Activated T-helper 2 cell treated with anti-CD3 and anti-CD28 coated beads, Interferon-gamma antibody, Interleukin-2, Interleukin-4, amounts not matched to agents 10 μg/mL and 5 μg/mL and 100 μg/mL, durations not matched to agents 14 hours and 24 hours and 36 hours (primary cell): ENCODE measurements at regions of chr1 and their contacts with region 1.

Region 1: DNA sequence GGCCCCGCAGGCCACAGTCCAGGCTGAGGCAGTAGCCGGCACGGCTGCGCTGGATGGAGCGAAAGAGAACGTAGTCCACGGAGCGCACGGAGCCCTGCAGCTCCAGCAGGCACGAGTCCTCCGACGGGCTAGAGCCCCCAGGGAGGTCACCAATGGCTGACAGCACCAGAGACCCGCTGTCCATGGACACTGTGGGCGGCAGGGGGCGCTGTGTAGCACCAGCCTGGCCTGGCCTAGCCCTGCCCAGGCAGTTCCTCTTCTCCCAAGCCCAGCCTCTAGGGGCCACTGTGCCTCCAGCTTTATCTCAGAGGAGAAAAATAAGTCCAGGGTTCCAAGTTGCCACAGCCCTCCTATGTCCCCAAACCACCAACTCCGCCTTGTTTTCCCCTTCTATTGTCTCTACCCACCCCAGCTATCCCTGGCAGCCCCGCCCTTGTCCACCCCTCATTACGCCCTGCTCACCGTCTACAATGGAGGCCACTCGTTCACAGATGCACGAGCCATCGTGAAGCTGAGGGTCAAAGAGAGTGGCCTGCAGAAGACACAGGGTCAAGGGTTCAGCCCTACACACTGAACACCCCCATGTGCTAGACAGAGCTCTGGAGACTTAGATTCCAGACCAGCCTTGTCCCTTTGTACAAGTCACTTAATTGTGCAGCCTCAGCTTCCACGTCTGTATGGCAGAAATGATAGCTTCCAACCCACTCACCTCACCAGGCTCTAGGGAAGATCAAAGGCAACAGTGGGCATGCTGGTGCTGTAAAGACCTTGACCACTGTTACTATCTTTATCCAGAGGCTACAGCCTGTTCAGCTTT is 4.4 kb downstream of the ENTREP3 start:
- DNase-seq: peak; percentile 91
- H3K4me3 Mint-ChIP-seq: peak overlapping the region; percentile 58
- H3K27ac Mint-ChIP-seq: no peak overlapping the region
- H3K4me1 Mint-ChIP-seq: peaks cover 23% of the 10 kb centered on the region
- H3K27me3 Mint-ChIP-seq: no peaks in the 10 kb centered on the region

Region 2: DNA sequence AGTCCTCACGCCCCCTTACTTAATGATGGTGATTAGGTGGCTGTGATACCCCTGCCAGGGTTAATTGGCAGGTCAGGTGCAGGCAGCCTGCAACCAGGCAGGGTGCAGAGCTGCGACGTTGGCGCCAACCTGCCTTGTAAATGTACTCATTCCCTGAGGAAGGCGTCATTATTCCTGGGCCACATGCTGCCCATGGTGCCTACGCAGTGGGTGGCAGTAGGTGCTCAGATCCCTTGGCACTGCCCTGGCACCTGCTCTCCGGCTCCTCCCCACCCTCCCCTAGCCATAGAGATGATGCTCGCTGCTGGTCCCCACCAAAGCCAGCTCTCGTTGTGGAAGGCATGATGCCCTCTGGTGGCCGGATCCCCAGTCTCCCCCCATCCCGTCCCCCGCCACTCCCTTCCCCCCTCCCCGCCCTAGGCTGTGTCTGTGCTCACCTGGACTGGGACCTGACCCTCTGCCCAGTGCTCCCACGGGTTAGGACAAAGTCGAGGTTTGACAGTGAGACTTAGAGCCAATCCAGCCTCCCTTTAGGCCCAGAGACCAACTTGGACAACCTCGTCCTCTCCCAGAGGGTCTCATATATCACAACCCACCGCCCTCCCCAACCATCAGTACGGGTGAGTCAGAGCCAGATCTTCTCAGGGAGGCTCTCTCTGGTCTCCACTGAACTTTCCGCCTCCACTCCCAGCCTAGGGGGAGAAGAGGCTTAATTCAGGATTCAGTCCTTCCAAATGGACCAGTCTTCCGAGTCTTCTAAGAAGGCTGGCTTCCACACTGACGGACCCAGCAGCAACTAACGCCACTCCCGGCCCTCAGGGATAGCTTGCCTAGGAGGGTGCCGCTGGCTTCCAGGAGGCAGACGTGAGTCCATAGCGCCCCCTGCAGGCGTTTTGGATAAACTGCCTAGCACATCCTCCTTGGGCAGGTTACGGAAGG is 83.4 kb before region 1 on chr1:
- intact Hi-C with region 1: no loop called
- DNase-seq: peak; percentile 77
- H3K4me3 Mint-ChIP-seq: peak overlapping the region; percentile 21
- H3K27ac Mint-ChIP-seq: no peak overlapping the region
- H3K4me1 Mint-ChIP-seq: peaks cover 20% of the 10 kb centered on the region
- H3K27me3 Mint-ChIP-seq: no peaks in the 10 kb centered on the region

Region 3: GRCh38 chr1:155323798-155324610 is 73.2 kb after region 1 on chr1:
- intact Hi-C with region 1: loop called (anchors 1 kb)
- DNase-seq: peak; percentile 89
- H3K4me3 Mint-ChIP-seq: peak overlapping the region; percentile 81
- H3K27ac Mint-ChIP-seq: peak overlapping the region; percentile 79
- H3K4me1 Mint-ChIP-seq: peaks cover 30% of the 10 kb centered on the region
- H3K27me3 Mint-ChIP-seq: no peaks in the 10 kb centered on the region

Region 4: DNA sequence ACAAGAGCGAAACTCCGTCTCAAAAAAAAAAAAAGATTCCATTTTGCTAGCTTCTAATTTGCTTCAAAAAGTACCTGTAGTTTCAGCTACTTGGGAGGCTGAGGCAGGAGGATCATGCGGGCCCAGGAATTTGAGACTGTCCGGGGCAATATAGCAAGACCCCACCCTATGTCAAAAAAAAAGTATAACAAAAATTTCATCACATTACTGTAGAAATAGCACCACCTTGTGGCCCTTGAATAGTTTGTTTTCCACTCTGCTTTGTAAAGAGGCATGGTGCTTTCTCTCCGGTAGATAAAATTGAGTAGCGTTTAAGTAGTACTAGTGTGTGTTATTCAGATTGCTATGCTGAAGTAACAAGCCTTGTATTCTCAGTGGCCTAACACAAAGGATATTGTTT is 340.9 kb after region 1 on chr1:
- intact Hi-C with region 1: loop called (anchors 5 kb)
- DNase-seq: no peak
- H3K4me3 Mint-ChIP-seq: no peak overlapping the region
- H3K27ac Mint-ChIP-seq: no peak overlapping the region
- H3K4me1 Mint-ChIP-seq: peaks cover 3% of the 10 kb centered on the region
- H3K27me3 Mint-ChIP-seq: no peaks in the 10 kb centered on the region